H1 (cell line): ENCODE measurements at regions of chr17 and their contacts with region 1.

Region 1: DNA sequence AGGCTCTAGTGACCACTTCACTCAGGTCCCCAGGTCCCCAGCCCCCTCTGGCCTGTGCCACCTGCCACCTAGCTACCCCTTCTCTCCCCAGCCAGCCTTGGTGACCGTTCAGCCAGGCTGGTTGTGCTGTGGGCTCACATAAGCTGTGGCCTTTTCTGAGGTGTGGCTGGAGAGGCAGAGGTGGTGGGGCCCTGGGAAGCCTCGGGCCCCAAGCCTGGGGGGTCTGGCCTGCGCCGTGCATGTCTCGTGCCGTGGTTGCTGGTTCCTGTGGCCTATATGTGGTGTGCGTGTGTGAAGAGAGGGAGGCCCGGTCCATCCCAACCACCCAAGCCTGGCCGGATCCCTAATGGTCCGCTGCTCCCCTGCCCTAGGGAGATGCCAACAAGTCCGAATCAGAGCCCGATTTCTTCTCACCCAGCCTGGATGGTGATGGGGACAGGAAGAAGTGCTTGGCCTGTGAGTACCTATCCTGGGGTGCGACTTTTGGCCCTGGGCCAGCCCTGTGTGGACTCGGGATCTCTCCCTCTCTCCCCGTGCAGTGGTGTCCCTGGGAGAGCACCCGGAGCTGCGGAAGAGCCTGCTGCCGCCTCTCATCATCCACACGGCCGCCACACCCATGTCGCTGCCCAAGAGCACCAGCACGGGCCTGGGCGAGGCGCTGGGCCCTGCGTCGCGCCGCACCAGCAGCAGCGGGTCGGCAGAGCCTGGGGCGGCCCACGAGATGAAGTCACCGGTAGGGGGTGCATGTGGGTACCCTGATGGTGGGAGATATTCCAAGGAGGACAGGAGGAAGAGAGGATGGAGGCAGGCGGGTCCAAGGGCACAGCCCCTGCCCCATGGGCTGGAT is 35.9 kb downstream of the CACNA1G start:
- DNase-seq: peak; percentile 38 to 88
- H3K4me3 ChIP-seq: no peak overlapping the region
- H3K27ac ChIP-seq: no peak overlapping the region
- H3K4me1 ChIP-seq: peaks cover 0 to 12% (median 7%) of the 10 kb centered on the region in 4 experiments; a peak in 6 of 7 replicates
- H3K27me3 ChIP-seq: no peaks in the 10 kb centered on the region; a peak in 1 of 7 replicates
- CTCF ChIP-seq: peak; percentile 74 to 83 (median 79)
- EP300 ChIP-seq: no peak
- POLR2A ChIP-seq: no peak
- RAD21 ChIP-seq: peak; percentile 37 to 68

Region 2: DNA sequence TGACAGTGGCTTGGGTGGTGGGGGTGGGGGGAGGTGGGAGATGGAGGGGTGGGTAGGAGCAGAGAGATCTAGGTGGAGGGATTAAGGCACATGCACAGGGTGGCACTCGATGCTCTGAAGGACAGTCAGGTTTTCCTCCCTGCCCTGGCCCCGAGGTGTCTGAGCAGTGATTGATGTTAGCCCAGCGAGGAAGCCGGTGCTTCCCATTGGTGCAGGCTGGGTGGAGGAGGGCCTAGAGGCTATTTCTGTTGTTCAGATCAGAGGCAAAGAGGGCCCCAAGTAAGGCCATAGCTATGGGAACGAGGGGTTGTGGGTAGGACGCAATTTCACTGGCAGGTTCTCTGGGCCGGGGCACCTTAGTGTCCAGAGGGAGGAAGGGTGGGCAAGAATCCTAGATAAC is 12.8 kb before region 1 on chr17:
- CTCF ChIA-PET with region 1: interaction called, 12 read pairs
- POLR2A ChIA-PET with region 1: interaction called, 4 read pairs
- DNase-seq: no peak
- H3K4me3 ChIP-seq: no peak overlapping the region
- H3K27ac ChIP-seq: no peak overlapping the region
- H3K4me1 ChIP-seq: peaks cover 0 to 22% (median 9%) of the 10 kb centered on the region in 4 experiments; a peak in 6 of 7 replicates
- H3K27me3 ChIP-seq: no peaks in the 10 kb centered on the region; a peak in 1 of 7 replicates
- CTCF ChIP-seq: no peak
- EP300 ChIP-seq: no peak
- POLR2A ChIP-seq: no peak
- RAD21 ChIP-seq: no peak

Region 3: GRCh38 chr17:50613007-50613992 is 16.9 kb after region 1 on chr17:
- CTCF ChIA-PET with region 1: interaction called, 49 read pairs
- POLR2A ChIA-PET with region 1: no interaction called
- DNase-seq: no peak
- H3K4me3 ChIP-seq: no peak overlapping the region
- H3K27ac ChIP-seq: no peak overlapping the region
- H3K4me1 ChIP-seq: peaks cover 0 to 6% (median 3%) of the 10 kb centered on the region in 4 experiments; a peak in 1 of 7 replicates
- H3K27me3 ChIP-seq: no peaks in the 10 kb centered on the region
- CTCF ChIP-seq: peak in 1 of 3 experiments; percentile 24; a peak in 2 of 4 replicates
- EP300 ChIP-seq: no peak
- POLR2A ChIP-seq: no peak
- RAD21 ChIP-seq: peak; percentile 37